ENCODE measurements at regions of chr2 and their contacts with region 1.

Region 1: GRCh38 chr2:149597668-149598326 is 10.2 kb upstream of the MMADHC start:
- DNase-seq: peak in 30 of 42 donors; percentile 14 to 78 (median 52)

Region 2: GRCh38 chr2:149629026-149629425 is 31.2 kb after region 1 on chr2:
- intact Hi-C with region 1: no loop called
- DNase-seq: no peak

Region 3: DNA sequence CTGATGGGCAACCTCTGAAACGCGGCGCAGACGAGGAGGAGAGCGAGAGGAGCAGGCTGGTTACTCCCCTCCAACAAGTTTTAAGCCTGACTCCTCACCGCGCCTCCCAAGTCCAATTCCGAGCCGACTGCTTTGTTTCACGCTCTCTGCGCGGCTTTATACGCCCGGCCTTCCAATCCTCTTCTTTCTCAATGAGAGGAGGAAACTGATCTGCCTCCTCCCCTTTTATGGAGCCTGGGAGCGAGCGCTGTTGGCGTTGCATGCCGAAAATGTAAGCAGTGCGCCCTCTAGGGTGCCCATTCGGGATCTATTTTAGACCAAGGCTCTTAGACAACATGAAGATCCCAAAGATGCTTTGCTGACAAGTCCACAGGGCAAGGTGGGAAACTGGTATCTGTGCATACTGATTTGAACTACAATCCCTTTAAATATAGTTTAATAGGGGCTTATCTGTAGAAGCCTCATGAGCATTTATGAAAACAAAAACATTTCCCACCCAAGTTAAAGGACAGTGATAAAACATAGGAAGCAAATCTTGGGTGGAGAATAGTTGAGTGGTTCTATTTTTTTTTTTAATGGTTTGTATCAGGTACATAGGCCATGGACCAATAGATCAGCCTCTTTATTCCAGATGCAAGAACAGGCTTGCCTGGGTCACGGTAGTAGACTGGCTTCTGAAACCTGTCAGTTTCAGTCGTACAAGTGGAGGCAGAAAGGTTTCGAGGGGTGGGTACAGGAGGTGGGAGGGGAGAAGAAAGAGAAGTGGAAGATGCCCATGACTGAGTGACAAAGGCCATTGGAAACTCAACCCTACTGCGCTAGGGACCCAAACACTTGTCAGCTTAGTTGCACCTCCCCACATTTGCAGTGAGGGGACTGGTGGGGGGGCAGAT is 890.0 kb after region 1 on chr2 and contains the start of gene RND3:
- intact Hi-C with region 1: loop called (anchors 5 kb)
- DNase-seq: peak; percentile 80 to 97 (median 92)

Region 4: DNA sequence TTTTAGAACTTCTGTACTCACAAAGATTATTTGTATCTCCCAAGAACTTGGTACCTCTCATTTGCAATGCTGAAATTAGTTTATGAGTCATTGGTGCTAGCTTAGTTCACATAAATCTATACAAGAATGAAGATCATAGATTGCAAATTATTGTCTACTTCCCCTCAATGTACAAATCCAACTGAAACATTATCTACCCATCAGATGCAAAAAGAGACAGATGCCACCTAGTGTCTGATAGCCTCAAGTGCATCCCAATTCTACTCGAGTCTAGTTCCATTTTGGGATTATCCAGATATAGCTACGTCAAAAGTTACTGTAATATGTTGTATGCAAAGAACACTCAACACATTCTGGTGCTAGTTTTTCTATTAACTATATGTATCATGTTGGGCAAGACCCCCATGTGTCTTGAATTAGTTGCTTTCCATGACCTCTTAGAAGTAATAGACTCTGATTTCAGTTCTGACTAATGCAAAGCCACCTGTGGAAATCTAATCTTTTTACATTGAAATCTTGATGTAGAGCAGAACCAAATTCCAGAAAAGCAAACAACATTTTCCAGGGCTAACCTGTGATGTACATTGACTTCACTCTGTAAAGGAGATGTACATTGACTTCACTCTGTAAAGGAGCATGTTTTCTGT is 1453.9 kb after region 1 on chr2:
- intact Hi-C with region 1: loop called (anchors 5 kb)
- DNase-seq: peak in 29 of 42 donors; percentile 14 to 77 (median 47)

Region 5: DNA sequence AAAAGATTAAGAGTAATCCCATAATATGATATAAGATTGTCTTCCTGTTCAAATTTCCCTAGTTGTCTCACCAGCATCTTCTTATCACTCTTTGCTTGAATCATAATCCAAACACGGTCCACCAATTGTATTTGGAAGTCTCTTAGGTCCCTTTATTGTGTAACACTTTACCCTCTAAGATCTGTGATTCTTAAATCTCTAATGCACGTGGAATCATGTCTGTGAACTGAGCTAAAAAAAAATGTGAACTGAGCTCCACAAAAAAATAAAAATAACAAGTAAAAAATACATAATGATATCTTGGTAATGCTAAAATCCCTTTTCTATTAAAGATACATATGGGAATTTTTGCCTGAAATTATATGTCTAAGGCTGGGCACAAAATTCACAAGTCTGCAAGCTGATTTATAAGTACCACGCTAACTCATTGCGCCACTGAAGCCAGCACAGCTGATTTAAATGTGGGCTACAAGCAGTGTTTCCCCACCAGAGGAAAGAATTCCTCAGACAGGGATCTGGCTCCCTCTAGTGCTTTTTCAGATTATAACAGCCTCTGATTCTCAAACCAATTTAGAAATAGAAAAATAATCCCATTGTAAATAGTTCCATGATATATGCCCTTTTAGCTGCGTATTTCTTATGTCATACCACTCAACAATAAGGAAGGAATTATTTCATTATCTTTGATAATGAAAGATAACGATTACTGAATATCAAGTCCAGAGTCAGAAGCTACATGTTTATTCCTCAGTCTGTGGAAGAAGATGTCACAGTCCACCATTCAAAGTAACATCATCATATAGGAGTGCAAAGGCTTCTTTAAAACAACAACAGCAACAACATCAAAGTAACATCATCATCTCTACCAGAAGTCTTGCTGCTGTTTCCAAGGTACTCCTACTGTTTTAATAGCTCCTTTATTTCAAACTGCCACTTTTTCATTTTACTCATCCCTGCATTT is 1641.0 kb after region 1 on chr2:
- intact Hi-C with region 1: loop called (anchors 10 kb)
- DNase-seq: peak in 38 of 42 donors; percentile 11 to 81 (median 54)

Measured in head of caudate nucleus (tissue), 42 donors.